ENCODE measurements at regions of chrX and their contacts with region 1.

Region 1: DNA sequence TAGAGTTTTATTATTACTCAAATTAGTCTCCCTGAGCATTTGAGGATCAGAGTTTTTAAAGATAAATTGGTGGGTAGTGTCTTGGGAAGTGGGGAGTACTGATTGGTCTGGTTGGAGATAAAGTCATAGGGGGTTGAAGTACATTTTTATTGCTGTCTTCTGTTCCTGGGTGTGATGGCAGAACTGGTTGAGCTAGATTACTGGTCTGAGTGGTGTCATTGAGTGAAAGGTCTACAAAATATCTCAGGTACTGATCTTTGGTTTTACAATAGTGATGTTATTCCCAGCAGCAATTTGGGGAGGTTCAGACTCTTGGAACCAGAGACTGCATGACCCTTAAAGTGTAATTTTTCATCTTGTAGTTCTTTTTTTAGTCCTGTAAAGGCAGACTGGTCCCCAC is 119.1 kb downstream of the SPIN3 start:
- DNase-seq: no peak
- ATAC-seq: no peak
- H3K4me3 Mint-ChIP-seq: no peak overlapping the region
- H3K27ac Mint-ChIP-seq: no peak overlapping the region
- H3K4me1 Mint-ChIP-seq: no peaks in the 10 kb centered on the region
- H3K27me3 Mint-ChIP-seq: no peaks in the 10 kb centered on the region

Region 2: GRCh38 chrX:56813318-56813837 is 62.9 kb before region 1 on chrX:
- CTCF ChIA-PET with region 1: no interaction called
- POLR2A ChIA-PET with region 1: no interaction called
- intact Hi-C with region 1: no loop called
- DNase-seq: peak; percentile 67
- ATAC-seq: peak; percentile 73
- H3K4me3 Mint-ChIP-seq: peak overlapping the region; percentile 67
- H3K27ac Mint-ChIP-seq: peak overlapping the region; percentile 99
- H3K4me1 Mint-ChIP-seq: peaks cover 47% of the 10 kb centered on the region
- H3K27me3 Mint-ChIP-seq: no peaks in the 10 kb centered on the region

Region 3: GRCh38 chrX:56920338-56920997 is 44.2 kb after region 1 on chrX:
- CTCF ChIA-PET with region 1: no interaction called
- POLR2A ChIA-PET with region 1: interaction called, 18 read pairs
- intact Hi-C with region 1: no loop called
- DNase-seq: no peak
- ATAC-seq: no peak
- H3K4me3 Mint-ChIP-seq: no peak overlapping the region
- H3K27ac Mint-ChIP-seq: no peak overlapping the region
- H3K4me1 Mint-ChIP-seq: no peaks in the 10 kb centered on the region
- H3K27me3 Mint-ChIP-seq: peaks cover 2% of the 10 kb centered on the region